Activated CD4-positive, alpha-beta memory T cell treated with anti-CD3 and anti-CD28 coated beads, Interleukin-2, amount 10 ng/mL, durations not matched to agents 7 days and 5 days (primary cell): ENCODE measurements at regions of chr1 and their contacts with region 1.

Region 1: GRCh38 chr1:62154687-62155086 is 40.0 kb upstream of the L1TD1 start:
- DNase-seq: no peak
- H3K4me3 Mint-ChIP-seq: no peak overlapping the region
- H3K27ac Mint-ChIP-seq: no peak overlapping the region
- H3K4me1 Mint-ChIP-seq: no peaks in the 10 kb centered on the region
- H3K27me3 Mint-ChIP-seq: no peaks in the 10 kb centered on the region

Region 2: DNA sequence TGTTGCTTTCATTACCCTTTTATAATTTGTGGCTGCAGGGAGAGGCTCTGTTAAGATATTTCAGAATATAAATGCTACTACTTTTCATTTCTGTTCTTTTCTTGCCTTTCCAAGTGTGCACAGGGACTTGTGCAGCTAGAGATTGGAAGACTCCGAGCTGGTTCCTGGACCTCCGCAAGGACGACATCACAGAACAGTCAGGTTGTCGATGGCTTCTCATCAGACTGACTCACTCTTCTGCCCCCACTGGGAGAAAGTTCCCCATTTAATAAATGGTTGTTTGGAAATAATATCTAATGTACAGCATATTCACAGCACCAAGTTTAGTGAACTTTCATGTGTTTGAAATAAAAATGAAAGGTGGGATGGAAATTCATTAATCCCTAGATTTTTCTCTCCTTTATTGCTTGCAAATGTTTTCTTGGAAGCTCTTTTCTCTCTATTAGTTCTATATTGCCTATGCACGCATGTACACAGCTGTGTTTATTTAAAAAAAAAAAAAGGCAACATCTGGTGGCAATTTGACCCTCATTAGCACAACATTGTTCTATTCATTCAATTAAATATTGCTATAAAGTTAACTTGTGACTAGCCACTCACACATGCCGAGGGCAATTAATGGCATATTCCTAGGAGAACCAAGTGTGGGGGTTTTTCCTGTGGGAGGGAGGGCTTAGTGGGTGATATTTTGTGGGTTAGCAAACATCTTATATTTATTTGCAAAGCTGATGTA is 37.5 kb before region 1 on chr1:
- CTCF ChIA-PET with region 1: no interaction called
- POLR2A ChIA-PET with region 1: no interaction called
- DNase-seq: no peak
- H3K4me3 Mint-ChIP-seq: no peak overlapping the region
- H3K27ac Mint-ChIP-seq: no peak overlapping the region
- H3K4me1 Mint-ChIP-seq: no peaks in the 10 kb centered on the region
- H3K27me3 Mint-ChIP-seq: no peaks in the 10 kb centered on the region

Region 3: GRCh38 chr1:62144238-62144831 is 10.4 kb before region 1 on chr1:
- CTCF ChIA-PET with region 1: interaction called, 10 read pairs
- POLR2A ChIA-PET with region 1: interaction called, 3 read pairs
- DNase-seq: peak; percentile 38
- H3K4me3 Mint-ChIP-seq: no peak overlapping the region
- H3K27ac Mint-ChIP-seq: no peak overlapping the region
- H3K4me1 Mint-ChIP-seq: no peaks in the 10 kb centered on the region
- H3K27me3 Mint-ChIP-seq: no peaks in the 10 kb centered on the region

Region 4: GRCh38 chr1:62181531-62181930 is 26.8 kb after region 1 on chr1:
- CTCF ChIA-PET with region 1: no interaction called
- POLR2A ChIA-PET with region 1: no interaction called
- DNase-seq: no peak
- H3K4me3 Mint-ChIP-seq: no peak overlapping the region
- H3K27ac Mint-ChIP-seq: no peak overlapping the region
- H3K4me1 Mint-ChIP-seq: no peaks in the 10 kb centered on the region
- H3K27me3 Mint-ChIP-seq: peaks cover 8% of the 10 kb centered on the region